ENCODE measurements at regions of chr2 and their contacts with region 1.

Region 1: DNA sequence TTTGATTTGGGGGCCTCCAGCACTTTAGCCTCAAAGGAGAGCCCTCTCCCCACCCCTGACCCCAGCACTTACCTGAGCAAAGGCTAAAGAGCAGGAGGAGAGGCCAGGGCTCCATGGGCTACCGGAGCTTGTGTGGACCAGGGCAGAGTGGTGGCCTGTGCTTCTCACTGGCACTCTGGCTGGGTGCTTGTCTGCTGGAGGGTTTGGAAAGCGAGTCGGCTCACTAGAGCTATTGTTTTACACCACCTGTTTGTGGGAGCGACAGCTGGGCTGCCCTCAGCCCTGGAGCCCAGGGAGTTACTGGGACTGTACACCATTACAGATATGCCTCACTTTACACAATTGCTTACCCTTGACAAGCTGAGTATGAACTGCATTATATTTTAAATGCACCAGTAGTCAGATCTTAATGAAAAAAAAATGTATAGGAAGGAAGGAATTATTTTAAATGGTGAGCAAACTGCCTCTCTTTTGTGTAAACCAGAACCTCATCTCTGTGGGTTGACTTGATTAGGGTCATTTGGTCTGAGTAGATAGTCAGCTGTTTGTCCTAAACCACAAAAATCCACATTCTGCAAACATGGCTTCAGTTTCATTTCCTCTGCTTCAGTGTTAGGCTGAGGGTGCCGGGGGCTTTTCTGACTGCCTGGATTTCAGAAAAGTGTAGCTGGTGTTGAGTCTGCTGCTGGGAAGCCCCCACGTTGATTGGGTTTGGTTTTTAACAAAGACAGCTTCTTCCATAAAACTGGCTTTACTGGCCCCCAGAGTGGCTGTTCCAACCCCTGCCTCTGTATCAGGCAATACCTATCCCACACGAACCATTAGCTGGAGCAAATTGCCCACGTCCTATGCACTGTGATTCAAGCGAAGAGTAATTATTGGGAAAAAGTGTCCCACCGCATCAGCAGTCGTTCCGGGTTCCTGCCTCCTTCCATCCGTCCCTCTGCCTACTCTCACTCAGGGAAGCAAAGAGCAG is at the start of gene CHRNA1:
- DNase-seq: no peak
- H3K4me3 ChIP-seq: no peak within 1 kb of the TSS
- H3K27ac ChIP-seq: no peak within 1 kb of the TSS
- H3K4me1 ChIP-seq: no peaks in the 10 kb centered on the region
- H3K27me3 ChIP-seq: peaks cover 0 to 3% (median 0%) of the 10 kb centered on the region in 4 donors
- CTCF ChIP-seq: no peak
- POLR2A ChIP-seq: no peak
- total RNA-seq, gene CHRNA1: not detected

Region 2: GRCh38 chr2:174985630-174986029 is 221.1 kb after region 1 on chr2:
- intact Hi-C with region 1: loop called (anchors 10 kb)
- DNase-seq: no peak
- H3K4me3 ChIP-seq: no peak overlapping the region
- H3K27ac ChIP-seq: no peak overlapping the region
- H3K4me1 ChIP-seq: no peaks in the 10 kb centered on the region
- H3K27me3 ChIP-seq: no peaks in the 10 kb centered on the region
- CTCF ChIP-seq: peak; percentile 13 to 48 (median 28)
- POLR2A ChIP-seq: no peak